Activated CD8-positive, alpha-beta T cell treated with anti-CD3 and anti-CD28 coated beads, Interleukin-2, amount 10 ng/mL, durations not matched to agents 7 days and 5 days (primary cell): ENCODE measurements at regions of chr1 and their contacts with region 1.

Region 1: DNA sequence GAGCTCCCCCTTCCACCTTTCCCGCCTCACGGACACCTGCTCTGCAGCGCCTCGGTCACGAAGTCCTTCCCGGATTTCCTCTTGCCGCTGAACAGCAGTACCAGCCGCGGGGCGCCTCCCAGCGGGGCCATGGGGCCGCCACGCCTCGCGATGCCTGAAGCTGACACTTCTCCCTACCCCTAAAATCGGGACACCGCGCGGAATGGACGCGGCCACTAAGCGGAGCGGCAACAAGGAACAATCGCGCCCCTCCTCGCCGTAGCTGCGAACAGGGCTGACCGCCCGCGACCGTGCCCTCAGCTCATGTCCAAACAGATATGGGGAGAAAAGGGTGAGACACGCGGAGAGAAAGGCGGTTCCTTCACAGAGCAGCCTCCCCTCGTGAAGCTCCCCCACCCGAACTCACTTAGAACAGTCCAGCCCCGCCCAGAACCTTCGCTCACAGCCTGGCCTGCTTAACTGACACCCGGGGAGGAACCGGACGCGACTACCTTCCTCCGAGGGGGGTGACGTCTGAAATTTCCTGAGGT is at the start of gene PMVK:
- DNase-seq: peak; percentile 98
- ATAC-seq: peak; percentile 86
- H3K4me3 Mint-ChIP-seq: peak within 1 kb of the TSS; percentile 95
- H3K27ac Mint-ChIP-seq: peak within 1 kb of the TSS; percentile 96
- H3K4me1 Mint-ChIP-seq: peaks cover 56% of the 10 kb centered on the region
- H3K27me3 Mint-ChIP-seq: no peaks in the 10 kb centered on the region
- total RNA-seq, gene PMVK: 40.9 to 43.8 TPM

Region 2: GRCh38 chr1:154809436-154810413 is 126.9 kb before region 1 on chr1:
- CTCF ChIA-PET with region 1: no interaction called
- POLR2A ChIA-PET with region 1: no interaction called
- DNase-seq: no peak
- ATAC-seq: peak; percentile 49
- H3K4me3 Mint-ChIP-seq: no peak overlapping the region
- H3K27ac Mint-ChIP-seq: peak overlapping the region; percentile 53
- H3K4me1 Mint-ChIP-seq: peaks cover 13% of the 10 kb centered on the region
- H3K27me3 Mint-ChIP-seq: peaks cover 11% of the 10 kb centered on the region

Region 3: GRCh38 chr1:154925335-154926170 is 11.1 kb before region 1 on chr1:
- CTCF ChIA-PET with region 1: interaction called, 7 read pairs
- POLR2A ChIA-PET with region 1: interaction called, 12 read pairs
- DNase-seq: no peak
- ATAC-seq: no peak
- H3K4me3 Mint-ChIP-seq: no peak overlapping the region
- H3K27ac Mint-ChIP-seq: peak overlapping the region; percentile 86
- H3K4me1 Mint-ChIP-seq: peaks cover 19% of the 10 kb centered on the region
- H3K27me3 Mint-ChIP-seq: no peaks in the 10 kb centered on the region

Region 4: GRCh38 chr1:154974063-154974807 is 37.6 kb after region 1 on chr1 and contains the start of gene CKS1B:
- CTCF ChIA-PET with region 1: interaction called, 4 read pairs
- POLR2A ChIA-PET with region 1: interaction called, 15 read pairs
- DNase-seq: peak; percentile 98
- ATAC-seq: peak; percentile 91
- H3K4me3 Mint-ChIP-seq: no peak within 1 kb of the TSS
- H3K27ac Mint-ChIP-seq: no peak within 1 kb of the TSS
- H3K4me1 Mint-ChIP-seq: peaks cover 40% of the 10 kb centered on the region
- H3K27me3 Mint-ChIP-seq: no peaks in the 10 kb centered on the region
- total RNA-seq, gene CKS1B: 151 to 153 TPM